ENCODE measurements at regions of chr2 and their contacts with region 1.

Region 1: DNA sequence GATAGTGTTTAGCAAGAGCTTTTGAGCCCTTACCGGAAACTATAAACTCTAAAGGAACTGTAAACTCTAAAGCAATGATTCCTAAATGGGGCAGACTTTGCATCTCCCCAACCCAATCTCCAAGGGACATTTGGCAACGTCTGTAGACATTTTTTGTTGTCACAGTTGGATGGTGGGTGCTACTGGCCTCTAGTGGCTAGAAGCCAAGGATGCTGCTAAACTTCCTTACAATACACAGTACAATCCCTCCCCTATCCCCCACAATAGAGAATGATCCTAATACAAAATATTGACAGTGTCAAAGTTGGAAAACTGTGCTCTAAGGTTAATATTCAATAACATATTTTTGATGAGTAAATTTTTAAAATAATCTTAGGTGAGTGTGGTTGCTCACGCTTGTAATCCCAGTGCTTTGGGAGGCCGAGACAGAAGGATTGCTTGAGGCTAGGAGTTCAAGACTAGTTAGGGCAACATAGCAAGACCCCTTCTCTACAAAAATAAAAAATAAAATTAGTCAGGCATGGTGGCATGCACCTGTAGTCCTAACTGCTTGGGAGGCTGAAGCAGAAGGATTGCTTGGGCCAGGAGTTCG is 66.7 kb downstream of the PTPN4 start:
- DNase-seq: peak in 1 of 7 donors; percentile 44
- H3K4me3 ChIP-seq: no peak overlapping the region
- H3K27ac ChIP-seq: no peak overlapping the region
- H3K4me1 ChIP-seq: peaks cover 0 to 12% of the 10 kb centered on the region in 2 donors
- H3K27me3 ChIP-seq: no peaks in the 10 kb centered on the region
- CTCF ChIP-seq: peak; percentile 6 to 39 (median 34)
- POLR2A ChIP-seq: no peak

Region 2: GRCh38 chr2:119730671-119731193 is 95.7 kb before region 1 on chr2:
- intact Hi-C with region 1: no loop called
- DNase-seq: peak in 1 of 7 donors; percentile 28
- H3K4me3 ChIP-seq: no peak overlapping the region
- H3K27ac ChIP-seq: no peak overlapping the region
- H3K4me1 ChIP-seq: no peaks in the 10 kb centered on the region
- H3K27me3 ChIP-seq: no peaks in the 10 kb centered on the region
- CTCF ChIP-seq: no peak
- POLR2A ChIP-seq: no peak

Region 3: DNA sequence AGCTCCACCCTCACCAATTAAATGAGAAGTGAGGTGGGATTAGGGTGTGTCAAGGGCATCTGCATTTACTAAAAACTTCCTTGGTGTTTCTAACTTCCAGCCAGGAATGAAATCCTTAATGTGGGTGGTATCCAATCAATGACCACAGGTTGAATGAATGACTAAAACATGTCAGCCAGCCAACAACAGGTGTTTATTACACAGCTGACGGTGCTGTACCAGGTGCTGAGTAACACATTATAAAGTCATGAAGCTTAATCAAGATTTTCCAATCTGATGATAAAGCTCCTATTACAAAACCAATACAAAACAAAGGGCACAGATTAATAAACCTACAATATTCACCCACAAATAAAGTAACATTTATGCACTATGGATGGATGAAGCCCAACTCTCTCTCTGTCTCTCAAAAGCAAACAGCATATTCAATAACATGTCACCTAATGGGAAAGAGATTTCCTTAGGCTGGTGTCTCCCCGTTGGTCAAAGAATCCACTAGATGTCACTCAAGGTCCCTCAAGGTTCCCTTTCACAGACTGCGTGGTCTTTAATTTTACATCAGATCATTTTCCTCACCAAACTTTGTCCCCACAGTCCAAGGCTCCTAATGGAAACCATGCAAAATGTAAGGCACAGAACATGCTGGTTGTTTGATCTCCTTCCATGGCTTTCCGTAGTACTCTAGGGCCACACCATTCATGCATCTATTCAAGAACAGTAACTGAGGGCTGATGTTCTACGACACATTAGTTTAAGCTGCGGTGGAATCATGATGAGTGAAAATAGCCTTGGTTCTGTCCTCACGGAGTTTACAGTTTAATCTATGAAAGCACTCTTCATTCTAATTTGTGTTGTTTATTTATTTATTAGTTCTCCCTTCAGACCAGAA is 73.2 kb before region 1 on chr2:
- intact Hi-C with region 1: loop called (anchors 5 to 10 kb)
- DNase-seq: peak in 5 of 7 donors; percentile 29 to 63 (median 42)
- H3K4me3 ChIP-seq: no peak overlapping the region
- H3K27ac ChIP-seq: no peak overlapping the region
- H3K4me1 ChIP-seq: peaks cover 5 to 11% of the 10 kb centered on the region in 2 donors
- H3K27me3 ChIP-seq: no peaks in the 10 kb centered on the region
- CTCF ChIP-seq: peak in 5 of 6 experiments; percentile 38 to 76 (median 68)
- POLR2A ChIP-seq: no peak

Region 4: GRCh38 chr2:119759451-119760236 is 66.8 kb before region 1 on chr2 and contains the start of gene PTPN4:
- intact Hi-C with region 1: loop called (anchors 5 to 10 kb)
- DNase-seq: peak; percentile 97 to 98 (median 97)
- H3K4me3 ChIP-seq: peak within 1 kb of the TSS; percentile 56 to 96 (median 83)
- H3K27ac ChIP-seq: peak within 1 kb of the TSS; percentile 89 to 96 (median 95)
- H3K4me1 ChIP-seq: peaks cover 12 to 34% of the 10 kb centered on the region in 2 donors
- H3K27me3 ChIP-seq: no peaks in the 10 kb centered on the region
- CTCF ChIP-seq: no peak
- POLR2A ChIP-seq: peak; percentile 74 to 96
- total RNA-seq, gene PTPN4: 28.8 to 56.5 (median 41.1) TPM

Measured in adrenal gland (tissue), 19 donors.